Activated CD4-positive, alpha-beta memory T cell treated with anti-CD3 and anti-CD28 coated beads for 36 hours (primary cell): ENCODE measurements at regions of chr10 and their contacts with region 1.

Region 1: GRCh38 chr10:84147347-84147746 is 8.0 kb downstream of the GHITM start:
- DNase-seq: no peak
- H3K4me3 Mint-ChIP-seq: no peak overlapping the region
- H3K27ac Mint-ChIP-seq: no peak overlapping the region
- H3K4me1 Mint-ChIP-seq: peaks cover 25% of the 10 kb centered on the region
- H3K27me3 Mint-ChIP-seq: no peaks in the 10 kb centered on the region

Region 2: GRCh38 chr10:84205049-84205852 is 57.9 kb after region 1 on chr10:
- CTCF ChIA-PET with region 1: interaction called, 75 read pairs
- POLR2A ChIA-PET with region 1: no interaction called
- intact Hi-C with region 1: loop called (anchors 1 kb)
- DNase-seq: peak; percentile 82
- H3K4me3 Mint-ChIP-seq: no peak overlapping the region
- H3K27ac Mint-ChIP-seq: no peak overlapping the region
- H3K4me1 Mint-ChIP-seq: no peaks in the 10 kb centered on the region
- H3K27me3 Mint-ChIP-seq: peaks cover 2% of the 10 kb centered on the region

Region 3: GRCh38 chr10:84214612-84215235 is 67.4 kb after region 1 on chr10:
- CTCF ChIA-PET with region 1: interaction called, 15 read pairs
- POLR2A ChIA-PET with region 1: no interaction called
- intact Hi-C with region 1: no loop called
- DNase-seq: peak; percentile 62
- H3K4me3 Mint-ChIP-seq: no peak overlapping the region
- H3K27ac Mint-ChIP-seq: no peak overlapping the region
- H3K4me1 Mint-ChIP-seq: no peaks in the 10 kb centered on the region
- H3K27me3 Mint-ChIP-seq: no peaks in the 10 kb centered on the region

Region 4: GRCh38 chr10:84256510-84257342 is 109.4 kb after region 1 on chr10:
- CTCF ChIA-PET with region 1: interaction called, 11 read pairs
- POLR2A ChIA-PET with region 1: no interaction called
- intact Hi-C with region 1: loop called (anchors 5 kb)
- DNase-seq: peak; percentile 71
- H3K4me3 Mint-ChIP-seq: no peak overlapping the region
- H3K27ac Mint-ChIP-seq: no peak overlapping the region
- H3K4me1 Mint-ChIP-seq: peaks cover 2% of the 10 kb centered on the region
- H3K27me3 Mint-ChIP-seq: peaks cover 9% of the 10 kb centered on the region

Region 5: DNA sequence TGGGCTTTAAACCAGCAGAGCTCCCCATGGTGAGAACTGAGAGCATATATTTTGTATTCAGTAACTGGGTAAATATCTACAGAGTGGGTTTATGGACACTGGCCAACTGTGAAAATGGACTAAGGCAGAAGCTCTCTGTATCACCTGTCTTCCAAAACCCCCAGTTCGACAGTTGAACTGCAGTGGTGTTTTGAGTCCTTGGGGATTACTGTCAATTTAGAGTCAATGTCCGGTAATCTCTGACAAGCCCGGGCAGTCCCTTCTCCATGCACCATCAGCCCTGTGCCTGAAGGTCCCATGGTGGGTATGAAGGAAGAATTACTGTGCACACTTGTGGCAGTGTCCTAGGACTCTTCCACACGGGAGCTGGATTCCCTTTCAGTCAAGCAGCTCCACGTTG is 416.0 kb after region 1 on chr10:
- CTCF ChIA-PET with region 1: no interaction called
- POLR2A ChIA-PET with region 1: no interaction called
- intact Hi-C with region 1: no loop called
- DNase-seq: no peak
- H3K4me3 Mint-ChIP-seq: no peak overlapping the region
- H3K27ac Mint-ChIP-seq: no peak overlapping the region
- H3K4me1 Mint-ChIP-seq: peaks cover 4% of the 10 kb centered on the region
- H3K27me3 Mint-ChIP-seq: peaks cover 28% of the 10 kb centered on the region